A673 (cell line): ENCODE measurements at regions of chr10 and their contacts with region 1.

Region 1: DNA sequence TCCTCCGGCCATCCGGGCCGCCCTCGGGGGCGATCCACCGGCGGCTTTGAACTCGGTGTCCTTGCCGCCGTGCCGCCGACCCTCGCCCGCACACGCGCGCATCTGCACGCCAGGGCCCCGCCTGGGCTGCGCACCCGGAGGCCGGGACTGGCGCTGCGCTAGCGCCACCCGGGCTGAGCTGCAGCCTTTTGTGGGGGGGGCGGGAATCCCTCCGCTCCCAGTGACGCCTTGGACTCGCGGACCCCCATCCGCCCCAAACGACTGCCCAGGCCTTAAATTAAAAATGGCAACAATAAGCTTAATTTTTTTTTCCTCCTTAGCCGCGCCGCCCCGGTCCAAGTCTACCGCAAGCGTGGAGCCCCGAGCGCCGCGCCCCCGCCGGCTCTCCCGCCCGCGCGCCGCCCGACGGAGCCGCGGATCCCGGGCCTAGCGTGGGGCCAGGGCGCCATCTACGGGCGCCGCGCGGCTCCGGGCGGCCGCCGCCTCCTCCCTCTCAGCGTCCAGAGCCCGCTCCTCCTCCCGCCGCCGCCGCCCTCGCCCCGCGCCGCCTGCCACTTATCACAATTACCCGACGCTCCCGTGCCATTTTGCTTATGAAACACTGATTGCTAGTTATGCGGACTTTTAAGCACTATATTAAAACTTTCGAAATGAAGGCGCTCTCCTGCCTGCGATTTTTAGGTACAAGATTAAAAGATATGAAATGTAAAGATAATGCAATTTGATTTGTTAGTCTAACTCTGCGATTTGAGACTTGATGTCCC is 7.5 kb upstream of the EBF3 start:
- DNase-seq: peak; percentile 90
- H3K4me3 ChIP-seq: peak overlapping the region; percentile 53
- H3K27ac ChIP-seq: no peak overlapping the region
- H3K4me1 ChIP-seq: peaks cover 19% of the 10 kb centered on the region
- H3K27me3 ChIP-seq: peaks cover 18% of the 10 kb centered on the region
- CTCF ChIP-seq: peak; percentile 43; the same call in 1 of the 2 replicates

Region 2: DNA sequence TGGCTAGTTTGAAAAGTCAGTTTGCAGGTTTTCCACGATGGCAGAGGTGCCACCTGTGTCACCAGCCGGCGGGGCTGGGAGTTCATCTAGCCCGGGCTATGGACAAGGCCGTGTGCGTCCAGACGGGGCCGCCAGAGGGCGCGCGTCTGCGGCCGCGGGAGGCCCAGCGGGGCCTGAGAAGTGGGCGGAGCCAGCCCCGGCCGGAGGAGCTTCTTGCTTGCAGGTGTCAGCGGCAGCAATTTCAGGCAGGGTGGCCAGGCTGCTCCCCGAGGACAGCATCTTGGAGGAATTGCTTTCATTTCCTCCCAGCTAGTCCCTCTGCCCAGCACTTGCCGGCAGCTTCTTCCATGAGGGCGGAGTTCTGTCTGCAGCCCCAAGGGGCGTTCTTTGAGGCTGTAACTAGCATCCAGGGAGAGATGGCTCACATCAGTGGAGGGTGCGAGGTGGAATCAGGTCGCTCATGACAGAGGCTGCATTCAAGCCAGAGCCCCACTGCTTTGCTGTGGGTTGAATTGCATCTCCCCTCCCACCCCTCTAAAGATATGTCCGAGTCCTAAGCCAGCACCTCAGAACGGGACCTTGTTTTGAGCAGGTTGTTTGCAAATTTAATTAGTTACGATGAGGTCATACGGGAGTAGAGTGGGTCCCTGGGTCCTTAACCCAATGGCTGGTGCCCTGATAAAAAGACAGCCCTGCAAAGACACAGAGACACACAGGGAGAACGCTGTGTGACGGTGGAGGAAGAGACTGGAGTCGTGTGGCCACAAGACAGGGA is 1759.4 kb before region 1 on chr10:
- CTCF ChIA-PET with region 1: no interaction called
- POLR2A ChIA-PET with region 1: no interaction called
- intact Hi-C with region 1: loop called (anchors 5 kb)
- DNase-seq: peak; percentile 83
- H3K4me3 ChIP-seq: peak overlapping the region; percentile 3
- H3K27ac ChIP-seq: no peak overlapping the region
- H3K4me1 ChIP-seq: no peaks in the 10 kb centered on the region
- H3K27me3 ChIP-seq: no peaks in the 10 kb centered on the region
- CTCF ChIP-seq: peak; percentile 98

Region 3: DNA sequence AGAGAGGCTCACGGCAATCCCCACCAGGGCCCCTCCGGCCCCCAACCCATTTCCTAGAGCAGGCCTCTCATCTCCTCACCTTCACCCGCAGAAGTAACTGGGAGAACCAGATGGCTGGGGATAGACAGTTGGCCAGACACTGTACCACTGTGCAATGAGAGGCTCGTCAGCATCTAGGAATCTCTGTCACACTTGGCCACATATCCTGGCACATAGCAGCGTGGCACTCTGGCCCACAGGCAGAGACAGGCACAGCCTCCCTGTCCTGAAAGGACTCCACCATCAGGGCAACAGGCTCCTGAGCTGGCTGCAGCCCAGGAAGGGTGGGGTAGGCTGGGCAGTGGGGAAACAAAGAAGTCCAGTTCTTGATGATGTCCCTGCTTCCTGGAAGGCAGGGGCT is 93.2 kb after region 1 on chr10:
- CTCF ChIA-PET with region 1: no interaction called
- POLR2A ChIA-PET with region 1: no interaction called
- intact Hi-C with region 1: no loop called
- DNase-seq: no peak
- H3K4me3 ChIP-seq: no peak overlapping the region
- H3K27ac ChIP-seq: no peak overlapping the region
- H3K4me1 ChIP-seq: peaks cover 9% of the 10 kb centered on the region
- H3K27me3 ChIP-seq: peaks cover 79% of the 10 kb centered on the region
- CTCF ChIP-seq: no peak

Region 4: GRCh38 chr10:130127364-130128061 is 155.9 kb after region 1 on chr10:
- CTCF ChIA-PET with region 1: interaction called, 5 read pairs
- POLR2A ChIA-PET with region 1: no interaction called
- intact Hi-C with region 1: loop called (anchors 10 kb)
- DNase-seq: peak; percentile 81
- H3K4me3 ChIP-seq: no peak overlapping the region
- H3K27ac ChIP-seq: no peak overlapping the region
- H3K4me1 ChIP-seq: peaks cover 11% of the 10 kb centered on the region
- H3K27me3 ChIP-seq: no peaks in the 10 kb centered on the region
- CTCF ChIP-seq: peak; percentile 88

Region 5: GRCh38 chr10:130179640-130180039 is 208.1 kb after region 1 on chr10:
- CTCF ChIA-PET with region 1: no interaction called
- POLR2A ChIA-PET with region 1: no interaction called
- intact Hi-C with region 1: loop called (anchors 5 kb)
- DNase-seq: peak; percentile 84
- H3K4me3 ChIP-seq: no peak overlapping the region
- H3K27ac ChIP-seq: no peak overlapping the region
- H3K4me1 ChIP-seq: no peaks in the 10 kb centered on the region
- H3K27me3 ChIP-seq: no peaks in the 10 kb centered on the region
- CTCF ChIP-seq: peak; percentile 67